Pancreas (tissue), 10 donors: ENCODE measurements at regions of chr6 and their contacts with region 1.

Region 1: DNA sequence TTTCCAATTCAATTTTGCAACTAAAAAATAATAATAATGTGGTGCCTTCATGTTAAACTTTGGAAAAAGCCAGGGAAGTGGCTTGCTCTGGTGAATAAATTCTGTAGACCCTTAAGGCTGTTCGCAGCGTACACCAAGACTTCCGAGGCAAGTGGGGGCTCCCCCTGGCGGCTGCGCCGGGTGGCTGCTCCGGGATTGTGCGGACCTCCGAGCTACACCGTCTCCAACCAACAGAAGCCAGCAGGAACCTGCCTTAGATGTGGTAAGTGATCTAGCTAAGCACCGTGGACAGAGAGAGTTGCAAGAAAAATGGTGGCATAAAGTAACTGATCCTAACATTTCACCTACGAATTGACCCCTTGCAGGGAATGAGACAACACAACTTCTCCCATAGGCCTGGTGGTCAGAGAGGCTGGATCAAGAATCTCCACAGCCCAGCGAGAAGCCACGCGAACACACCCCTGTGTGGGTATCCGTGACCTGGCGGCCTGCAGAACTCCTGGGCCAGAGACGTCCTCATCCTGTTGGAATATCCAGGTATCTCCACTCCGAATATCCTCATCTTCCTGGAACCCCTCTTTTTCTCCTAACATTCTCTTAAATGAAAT is 69.6 kb downstream of the TBXT start:
- DNase-seq: peak; percentile 55 to 89 (median 71)
- ATAC-seq: peak; percentile 97 to 100 (median 99)
- H3K4me3 ChIP-seq: peak overlapping the region in 2 of 4 donors; percentile 35 to 40
- H3K27ac ChIP-seq: no peak overlapping the region
- H3K4me1 ChIP-seq: no peaks in the 10 kb centered on the region
- H3K27me3 ChIP-seq: peaks cover 0 to 2% (median 0%) of the 10 kb centered on the region in 4 donors
- CTCF ChIP-seq: peak; percentile 80 to 92 (median 89)

Region 2: GRCh38 chr6:165895421-165896165 is 202.4 kb before region 1 on chr6:
- intact Hi-C with region 1: loop called in 2 of 3 experiments (anchors 5 kb)
- DNase-seq: no peak
- ATAC-seq: peak in 1 of 4 donors; percentile 21
- H3K4me3 ChIP-seq: no peak overlapping the region
- H3K27ac ChIP-seq: no peak overlapping the region
- H3K4me1 ChIP-seq: no peaks in the 10 kb centered on the region
- H3K27me3 ChIP-seq: no peaks in the 10 kb centered on the region
- CTCF ChIP-seq: no peak